Activated naive CD4-positive, alpha-beta T cell treated with anti-CD3 and anti-CD28 coated beads, Interleukin-2, amount 10 ng/mL, durations not matched to agents 7 days and 5 days (primary cell): ENCODE measurements at regions of chr2 and their contacts with region 1.

Region 1: GRCh38 chr2:172102391-172103278 is at the start of gene DLX2:
- DNase-seq: peak; percentile 81
- H3K4me3 Mint-ChIP-seq: peak within 1 kb of the TSS; percentile 75
- H3K27ac Mint-ChIP-seq: peak within 1 kb of the TSS; percentile 77
- H3K4me1 Mint-ChIP-seq: peaks cover 58% of the 10 kb centered on the region
- H3K27me3 Mint-ChIP-seq: peaks cover 99% of the 10 kb centered on the region

Region 2: GRCh38 chr2:171703574-171704347 is 398.9 kb before region 1 on chr2:
- CTCF ChIA-PET with region 1: interaction called, 103 read pairs
- DNase-seq: no peak
- H3K4me3 Mint-ChIP-seq: no peak overlapping the region
- H3K27ac Mint-ChIP-seq: no peak overlapping the region
- H3K4me1 Mint-ChIP-seq: no peaks in the 10 kb centered on the region
- H3K27me3 Mint-ChIP-seq: no peaks in the 10 kb centered on the region

Region 3: GRCh38 chr2:172083628-172084483 is 18.8 kb before region 1 on chr2:
- CTCF ChIA-PET with region 1: interaction called, 13 read pairs
- DNase-seq: peak; percentile 22
- H3K4me3 Mint-ChIP-seq: peak overlapping the region; percentile 68
- H3K27ac Mint-ChIP-seq: peak overlapping the region; percentile 81
- H3K4me1 Mint-ChIP-seq: peaks cover 70% of the 10 kb centered on the region
- H3K27me3 Mint-ChIP-seq: peaks cover 100% of the 10 kb centered on the region

Region 4: DNA sequence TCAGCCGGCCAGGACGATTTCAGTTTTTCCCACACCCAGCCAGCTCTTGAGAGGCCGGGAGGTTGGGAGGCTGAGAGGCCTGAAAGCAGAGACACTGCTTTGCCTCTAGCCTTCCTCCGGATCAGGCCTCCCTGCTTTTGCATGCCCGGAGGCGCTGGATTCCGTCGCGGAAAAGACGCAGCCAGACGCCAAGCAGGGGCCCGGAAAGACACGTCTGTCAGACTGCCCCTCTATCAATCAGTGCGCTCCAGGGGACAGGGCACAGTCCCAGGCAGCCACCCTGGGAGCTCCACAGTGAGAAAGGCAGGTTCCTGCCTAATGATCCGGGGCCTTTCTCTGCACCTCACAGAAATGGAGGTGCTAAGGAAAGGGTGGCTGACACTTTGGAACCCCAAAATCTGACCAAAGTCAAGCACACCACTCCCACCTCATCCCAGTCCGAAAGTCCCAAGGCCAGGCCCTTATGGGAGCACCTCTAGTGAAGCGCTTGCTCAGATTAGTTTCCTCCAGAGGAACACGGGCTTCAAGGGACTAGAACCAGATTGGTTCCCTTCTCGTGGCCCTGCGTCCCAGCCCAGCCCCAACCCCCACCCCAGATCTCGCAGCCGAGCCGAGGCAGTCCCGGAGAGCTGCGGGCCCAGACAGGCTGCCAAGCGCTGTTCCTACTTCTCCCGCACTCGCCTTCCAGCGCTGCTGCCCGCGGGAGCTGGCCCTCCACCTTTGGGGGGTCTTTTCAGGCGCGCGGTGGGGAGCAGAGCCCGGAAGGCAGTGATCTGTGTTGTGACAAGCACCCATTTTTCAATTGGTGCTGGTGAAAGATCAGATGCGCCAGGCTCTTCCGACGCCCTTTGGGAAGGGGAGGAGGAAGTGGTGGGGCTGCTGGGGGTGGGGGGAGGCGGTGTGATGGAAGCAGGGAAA is 12.3 kb before region 1 on chr2:
- CTCF ChIA-PET with region 1: interaction called, 11 read pairs
- DNase-seq: no peak
- H3K4me3 Mint-ChIP-seq: peak overlapping the region; percentile 5
- H3K27ac Mint-ChIP-seq: peak overlapping the region; percentile 69
- H3K4me1 Mint-ChIP-seq: peaks cover 48% of the 10 kb centered on the region
- H3K27me3 Mint-ChIP-seq: peaks cover 97% of the 10 kb centered on the region

Region 5: DNA sequence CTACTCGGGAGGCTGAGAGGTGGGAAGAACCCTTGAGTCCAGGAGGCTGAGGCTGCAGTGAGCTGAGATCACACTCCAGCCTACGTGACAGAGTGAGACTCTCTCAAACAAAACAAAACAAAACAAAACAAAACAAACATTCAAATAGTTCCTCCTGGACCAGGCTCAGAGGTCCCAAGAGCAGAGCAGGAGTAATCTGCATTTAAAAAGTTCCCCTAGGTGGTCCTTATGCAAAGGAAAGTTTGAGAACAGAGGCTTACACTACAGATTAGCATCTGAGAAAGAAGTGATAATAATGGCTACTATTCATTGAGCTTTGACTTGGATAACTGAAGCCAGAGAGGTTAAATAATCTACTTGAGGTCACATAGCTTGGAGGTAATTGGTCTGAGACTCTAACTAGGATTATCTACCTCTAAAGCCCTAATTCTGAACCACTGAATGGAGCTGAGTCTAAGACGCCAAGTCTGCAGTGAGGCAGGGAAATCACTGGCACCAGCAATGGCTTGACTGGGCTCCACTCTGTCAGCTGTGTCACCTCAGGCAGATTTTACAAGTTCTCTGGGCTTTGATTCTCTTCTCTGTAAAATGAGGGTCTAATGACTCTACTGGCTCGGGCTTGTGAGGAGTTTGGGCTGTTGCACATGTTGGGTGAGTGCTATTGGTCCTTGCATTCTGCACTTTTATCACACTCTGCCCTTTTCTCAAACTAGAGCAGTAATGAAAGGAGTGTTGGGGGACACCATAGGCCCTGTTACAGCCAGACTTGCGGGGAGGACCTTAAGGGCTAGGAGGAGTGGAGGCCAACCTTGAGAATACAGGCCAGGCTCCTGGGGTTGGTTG is 29.3 kb after region 1 on chr2:
- CTCF ChIA-PET with region 1: interaction called, 17 read pairs
- DNase-seq: no peak
- H3K4me3 Mint-ChIP-seq: no peak overlapping the region
- H3K27ac Mint-ChIP-seq: no peak overlapping the region
- H3K4me1 Mint-ChIP-seq: no peaks in the 10 kb centered on the region
- H3K27me3 Mint-ChIP-seq: peaks cover 34% of the 10 kb centered on the region